ENCODE measurements at regions of chr2 and their contacts with region 1.

Region 1: DNA sequence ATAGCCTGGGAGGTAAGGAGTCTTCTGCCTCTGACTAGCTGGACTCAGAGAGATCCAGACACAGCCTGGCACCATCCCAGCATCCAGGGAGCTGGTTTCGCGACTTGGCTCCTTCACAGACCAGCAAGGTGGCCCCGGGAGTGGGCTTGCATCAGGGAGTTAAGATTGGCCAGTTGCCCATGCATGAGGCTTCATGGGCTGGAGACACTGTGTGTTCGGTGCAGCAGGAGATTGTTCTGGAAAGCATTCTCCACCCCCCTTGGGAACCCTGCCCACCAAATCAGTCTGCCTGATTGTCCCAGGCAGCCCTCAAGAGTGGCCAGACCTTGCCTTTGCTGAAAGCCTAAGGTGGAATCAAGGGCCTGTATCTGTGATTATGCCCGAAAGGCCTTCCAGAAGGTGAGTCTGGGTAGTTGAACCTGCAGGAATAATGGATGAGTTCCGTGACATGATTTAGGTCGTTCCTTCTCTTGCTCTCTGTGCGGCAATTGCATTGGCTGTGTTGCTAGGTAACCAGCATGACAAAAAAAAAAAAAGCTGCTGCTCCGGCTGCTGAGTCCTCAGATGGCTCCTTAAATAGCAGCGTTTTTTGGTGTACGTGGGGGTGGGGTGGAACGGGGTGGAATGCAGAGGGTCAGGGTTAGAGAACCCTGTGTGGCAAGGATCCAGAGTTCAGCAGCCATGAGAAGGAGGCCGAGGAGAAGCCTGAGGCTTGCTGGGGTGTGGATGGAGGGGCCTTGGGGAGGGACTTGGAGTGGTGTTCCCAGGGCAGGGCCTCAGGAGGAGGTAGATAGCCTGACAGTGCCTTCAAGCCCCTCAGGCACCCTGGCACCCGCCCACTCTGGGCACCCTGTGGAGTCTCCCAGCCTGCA is 93.0 kb upstream of the MCFD2 start:
- DNase-seq: peak; percentile 63 to 84 (median 77)
- ATAC-seq: peak; percentile 52 to 79 (median 68)
- H3K4me3 ChIP-seq: no peak overlapping the region
- H3K27ac ChIP-seq: peak overlapping the region; percentile 27 to 85 (median 80)
- H3K4me1 ChIP-seq: peaks cover 3 to 56% (median 27%) of the 10 kb centered on the region in 12 donors
- H3K27me3 ChIP-seq: no peaks in the 10 kb centered on the region
- CTCF ChIP-seq: no peak
- POLR2A ChIP-seq: no peak

Region 2: GRCh38 chr2:47026748-47027534 is 18.3 kb after region 1 on chr2:
- intact Hi-C with region 1: loop called in 1 of 10 experiments (anchors 2 kb)
- DNase-seq: peak in 1 of 5 donors; percentile 61
- ATAC-seq: peak in 3 of 4 donors; percentile 17 to 45 (median 44)
- H3K4me3 ChIP-seq: no peak overlapping the region
- H3K27ac ChIP-seq: peak overlapping the region in 10 of 12 donors; percentile 20 to 74 (median 67)
- H3K4me1 ChIP-seq: peaks cover 0 to 67% (median 28%) of the 10 kb centered on the region in 12 donors
- H3K27me3 ChIP-seq: no peaks in the 10 kb centered on the region
- CTCF ChIP-seq: no peak
- POLR2A ChIP-seq: no peak

Region 3: GRCh38 chr2:47058003-47058931 is 49.6 kb after region 1 on chr2:
- intact Hi-C with region 1: no loop called
- DNase-seq: peak in 3 of 5 donors; percentile 37 to 63 (median 56)
- ATAC-seq: peak; percentile 34 to 75 (median 48)
- H3K4me3 ChIP-seq: no peak overlapping the region
- H3K27ac ChIP-seq: peak overlapping the region in 11 of 12 donors; percentile 71 to 96 (median 85)
- H3K4me1 ChIP-seq: peaks cover 25 to 80% (median 64%) of the 10 kb centered on the region in 12 donors
- H3K27me3 ChIP-seq: no peaks in the 10 kb centered on the region
- CTCF ChIP-seq: no peak
- POLR2A ChIP-seq: no peak